PC-9 (cell line): ENCODE measurements at regions of chr15 and their contacts with region 1.

Region 1: DNA sequence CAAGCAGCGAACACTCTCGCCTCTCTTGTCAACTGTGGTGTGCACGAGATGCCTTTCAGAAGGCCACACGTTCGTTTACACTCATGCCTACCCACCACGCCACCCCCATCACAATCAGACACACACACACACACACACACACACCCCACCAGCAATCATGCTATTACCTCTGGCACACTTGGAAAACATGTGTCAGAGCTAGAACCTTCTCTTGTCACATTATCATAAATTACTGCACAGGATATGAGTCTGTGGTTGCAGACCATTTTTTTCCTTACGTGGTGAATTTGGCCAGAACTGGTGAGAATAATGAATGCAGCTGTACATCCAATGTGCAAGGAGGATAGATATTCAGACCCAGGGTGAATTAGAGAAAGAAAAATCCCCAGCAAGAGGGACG is 52.4 kb downstream of the TRIM69 start:
- DNase-seq: no peak
- H3K4me3 ChIP-seq: no peak overlapping the region
- H3K27ac ChIP-seq: no peak overlapping the region
- H3K4me1 ChIP-seq: 0 out of 2 replicates have a peak, but pooled peaks cover 4% of the 10 kb centered on the region
- H3K27me3 ChIP-seq: no peaks in the 10 kb centered on the region
- CTCF ChIP-seq: no peak

Region 2: DNA sequence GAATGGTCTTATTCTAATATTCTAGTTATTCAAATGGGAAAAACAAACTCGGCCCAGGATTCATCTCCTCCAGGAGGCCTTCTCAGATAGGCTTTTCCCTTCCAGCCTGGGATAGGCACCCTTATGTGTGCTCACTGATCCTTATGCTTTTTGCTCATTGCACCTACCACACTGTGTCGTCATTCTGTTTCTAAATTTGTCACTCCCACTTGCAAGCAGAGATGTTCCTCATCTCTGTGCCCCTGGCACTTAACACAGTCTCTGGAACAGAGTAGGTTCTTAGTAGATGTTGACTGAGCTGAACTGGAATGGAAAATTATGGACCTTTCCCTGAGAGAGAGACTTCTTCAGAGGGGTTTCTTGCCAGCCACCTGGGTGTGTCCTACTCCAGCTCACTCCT is 106.5 kb before region 1 on chr15:
- CTCF ChIA-PET with region 1: no interaction called
- POLR2A ChIA-PET with region 1: interaction called, 10 read pairs
- intact Hi-C with region 1: no loop called
- DNase-seq: no peak
- H3K4me3 ChIP-seq: no peak overlapping the region
- H3K27ac ChIP-seq: no peak overlapping the region
- H3K4me1 ChIP-seq: peaks cover 20% of the 10 kb centered on the region
- H3K27me3 ChIP-seq: no peaks in the 10 kb centered on the region
- CTCF ChIP-seq: no peak